GM12878 (cell line): ENCODE measurements at regions of chr1 and their contacts with region 1.

Region 1: GRCh38 chr1:116934586-116935207 is 25.0 kb downstream of the PTGFRN start:
- DNase-seq: no peak
- ATAC-seq: peak; percentile 83
- H3K4me3 ChIP-seq: no peak overlapping the region
- H3K27ac ChIP-seq: no peak overlapping the region
- H3K4me1 ChIP-seq: no peaks in the 10 kb centered on the region
- H3K27me3 ChIP-seq: no peaks in the 10 kb centered on the region
- CTCF ChIP-seq: peak; percentile 37 to 54 (median 43); a peak in 5 of 6 replicates
- EP300 ChIP-seq: no peak
- POLR2A ChIP-seq: no peak
- RAD21 ChIP-seq: peak; percentile 39; the same call in 1 of the 2 replicates

Region 2: DNA sequence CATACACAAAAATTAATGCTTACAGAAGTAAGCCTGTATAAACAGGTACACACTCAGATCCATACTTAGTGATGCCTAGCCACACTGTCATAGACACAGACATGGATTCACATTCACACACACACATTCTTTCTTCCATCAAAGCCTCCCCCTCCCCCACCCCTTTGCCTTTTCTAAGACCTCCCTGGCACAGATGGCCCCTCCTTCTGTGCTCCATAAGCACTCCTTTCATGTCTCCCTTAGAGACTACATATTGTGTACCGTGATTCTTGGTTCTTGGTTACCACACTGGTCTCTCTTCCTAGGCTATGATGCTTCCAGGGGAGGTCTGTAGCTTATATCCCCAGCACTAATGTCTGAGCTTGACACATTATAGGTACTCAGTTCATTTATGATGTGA is 1091.7 kb before region 1 on chr1:
- CTCF ChIA-PET with region 1: no interaction called
- POLR2A ChIA-PET with region 1: no interaction called
- RAD21 ChIA-PET with region 1: no interaction called
- SMC1A ChIA-PET with region 1: no interaction called
- in situ Hi-C with region 1: no loop called
- intact Hi-C with region 1: no loop called
- DNase-seq: no peak
- ATAC-seq: no peak
- H3K4me3 ChIP-seq: no peak overlapping the region
- H3K27ac ChIP-seq: no peak overlapping the region
- H3K4me1 ChIP-seq: no peaks in the 10 kb centered on the region
- H3K27me3 ChIP-seq: peaks cover 8 to 19% of the 10 kb centered on the region in 2 experiments
- CTCF ChIP-seq: no peak
- EP300 ChIP-seq: no peak
- POLR2A ChIP-seq: no peak
- RAD21 ChIP-seq: no peak

Region 3: GRCh38 chr1:116853670-116854402 is 80.9 kb before region 1 on chr1:
- CTCF ChIA-PET with region 1: interaction called, 7 read pairs
- POLR2A ChIA-PET with region 1: no interaction called
- RAD21 ChIA-PET with region 1: interaction called, 9 read pairs
- SMC1A ChIA-PET with region 1: interaction called, 10 read pairs
- in situ Hi-C with region 1: no loop called
- intact Hi-C with region 1: no loop called
- DNase-seq: no peak
- ATAC-seq: peak; percentile 81
- H3K4me3 ChIP-seq: no peak overlapping the region
- H3K27ac ChIP-seq: no peak overlapping the region
- H3K4me1 ChIP-seq: 0 out of 2 replicates have a peak, but pooled peaks cover 3% of the 10 kb centered on the region
- H3K27me3 ChIP-seq: no peaks in the 10 kb centered on the region
- CTCF ChIP-seq: no peak
- EP300 ChIP-seq: no peak
- POLR2A ChIP-seq: no peak
- RAD21 ChIP-seq: no peak

Region 4: GRCh38 chr1:116873680-116874271 is 60.9 kb before region 1 on chr1:
- CTCF ChIA-PET with region 1: interaction called, 8 read pairs
- POLR2A ChIA-PET with region 1: interaction called, 4 read pairs
- RAD21 ChIA-PET with region 1: interaction called, 22 read pairs
- SMC1A ChIA-PET with region 1: interaction called, 25 read pairs
- in situ Hi-C with region 1: no loop called
- intact Hi-C with region 1: no loop called
- DNase-seq: no peak
- ATAC-seq: peak; percentile 11
- H3K4me3 ChIP-seq: no peak overlapping the region
- H3K27ac ChIP-seq: no peak overlapping the region
- H3K4me1 ChIP-seq: peaks cover 8% of the 10 kb centered on the region; the same call in 1 of the 2 replicates
- H3K27me3 ChIP-seq: no peaks in the 10 kb centered on the region
- CTCF ChIP-seq: no peak
- EP300 ChIP-seq: no peak
- POLR2A ChIP-seq: no peak
- RAD21 ChIP-seq: no peak

Region 5: DNA sequence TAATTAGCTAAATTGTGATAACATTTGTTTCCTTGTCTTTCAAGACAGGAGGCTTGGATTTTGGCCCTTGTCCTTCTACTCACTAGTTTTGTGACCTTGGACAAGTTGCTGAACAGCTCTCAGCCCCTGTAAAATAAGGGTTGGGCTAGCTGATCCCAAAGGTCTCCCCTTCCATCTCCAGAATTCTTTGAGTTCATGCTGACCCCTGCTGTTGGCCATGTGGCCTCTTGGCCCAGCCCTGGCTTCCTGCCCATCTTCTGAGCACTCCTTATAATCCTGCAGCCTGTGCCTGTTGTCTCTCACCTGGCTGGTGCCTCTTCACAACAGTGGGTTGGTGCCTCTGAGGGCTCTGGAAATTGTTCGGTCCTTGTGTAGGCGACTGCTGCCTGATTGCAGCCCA is 14.9 kb before region 1 on chr1:
- CTCF ChIA-PET with region 1: interaction called, 10 read pairs
- POLR2A ChIA-PET with region 1: interaction called, 4 read pairs
- RAD21 ChIA-PET with region 1: interaction called, 13 read pairs
- SMC1A ChIA-PET with region 1: interaction called, 24 read pairs
- in situ Hi-C with region 1: no loop called
- intact Hi-C with region 1: no loop called
- DNase-seq: no peak
- ATAC-seq: peak; percentile 36
- H3K4me3 ChIP-seq: no peak overlapping the region
- H3K27ac ChIP-seq: no peak overlapping the region
- H3K4me1 ChIP-seq: no peaks in the 10 kb centered on the region
- H3K27me3 ChIP-seq: peaks cover 0 to 2% of the 10 kb centered on the region in 2 experiments; a peak in 1 of 4 replicates
- CTCF ChIP-seq: no peak
- EP300 ChIP-seq: no peak
- POLR2A ChIP-seq: no peak
- RAD21 ChIP-seq: no peak

Region 6: GRCh38 chr1:116954440-116954839 is 19.7 kb after region 1 on chr1:
- CTCF ChIA-PET with region 1: interaction called, 13 read pairs
- POLR2A ChIA-PET with region 1: no interaction called
- RAD21 ChIA-PET with region 1: no interaction called
- SMC1A ChIA-PET with region 1: interaction called, 4 read pairs
- in situ Hi-C with region 1: no loop called
- intact Hi-C with region 1: no loop called
- DNase-seq: no peak
- ATAC-seq: no peak
- H3K4me3 ChIP-seq: no peak overlapping the region
- H3K27ac ChIP-seq: no peak overlapping the region
- H3K4me1 ChIP-seq: no peaks in the 10 kb centered on the region
- H3K27me3 ChIP-seq: no peaks in the 10 kb centered on the region; a peak in 1 of 4 replicates
- CTCF ChIP-seq: no peak
- EP300 ChIP-seq: no peak
- POLR2A ChIP-seq: no peak
- RAD21 ChIP-seq: no peak

Region 7: GRCh38 chr1:117037802-117038201 is 103.1 kb after region 1 on chr1:
- CTCF ChIA-PET with region 1: no interaction called
- POLR2A ChIA-PET with region 1: no interaction called
- RAD21 ChIA-PET with region 1: no interaction called
- SMC1A ChIA-PET with region 1: no interaction called
- in situ Hi-C with region 1: no loop called
- intact Hi-C with region 1: no loop called
- DNase-seq: no peak
- ATAC-seq: no peak
- H3K4me3 ChIP-seq: no peak overlapping the region
- H3K27ac ChIP-seq: no peak overlapping the region
- H3K4me1 ChIP-seq: no peaks in the 10 kb centered on the region
- H3K27me3 ChIP-seq: no peaks in the 10 kb centered on the region
- CTCF ChIP-seq: no peak
- EP300 ChIP-seq: no peak
- POLR2A ChIP-seq: no peak
- RAD21 ChIP-seq: no peak

Region 8: DNA sequence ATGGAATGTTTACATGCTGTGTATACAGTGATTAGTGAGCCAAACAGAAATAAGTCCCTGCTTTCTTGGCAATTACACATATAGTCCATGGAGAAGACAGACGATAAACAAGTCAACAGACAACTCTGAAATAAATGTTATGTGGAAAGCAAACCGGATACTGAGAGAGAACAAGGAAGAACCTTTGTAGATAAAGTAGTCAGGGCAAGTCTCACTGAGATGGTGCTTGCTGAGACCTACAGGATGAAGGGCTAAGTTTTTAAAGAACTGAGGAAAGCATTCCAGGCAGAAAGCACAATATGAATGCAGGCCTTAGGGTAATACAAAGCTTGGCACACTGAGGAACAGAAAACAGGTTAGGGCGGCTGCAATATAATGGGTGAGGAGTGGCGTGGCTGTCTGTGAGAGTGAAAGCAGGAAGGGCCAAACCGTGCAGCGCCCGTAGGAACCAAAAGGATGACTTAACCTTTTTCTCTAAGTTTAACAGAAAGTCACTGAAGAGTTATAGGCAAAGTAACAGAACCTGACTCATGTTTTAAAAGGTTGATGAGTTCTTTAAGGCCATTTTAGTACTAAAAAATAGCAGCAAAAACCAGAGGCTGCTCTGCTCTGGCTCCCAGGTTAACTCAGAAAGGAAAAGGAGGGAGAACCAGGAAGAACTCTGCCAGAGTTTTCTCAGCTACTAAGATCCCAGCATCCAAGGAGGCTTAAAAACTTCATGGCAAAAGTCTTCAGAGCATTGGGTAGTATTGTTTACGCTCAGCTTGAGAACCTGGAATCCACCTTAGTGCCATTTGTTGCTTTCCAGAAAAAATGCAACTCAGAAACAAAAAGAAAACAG is 116.7 kb after region 1 on chr1:
- CTCF ChIA-PET with region 1: interaction called, 9 read pairs
- POLR2A ChIA-PET with region 1: no interaction called
- RAD21 ChIA-PET with region 1: interaction called, 6 read pairs
- SMC1A ChIA-PET with region 1: interaction called, 4 read pairs
- in situ Hi-C with region 1: no loop called
- intact Hi-C with region 1: loop called (anchors 5 kb)
- DNase-seq: peak; percentile 34
- ATAC-seq: peak; percentile 93
- H3K4me3 ChIP-seq: peak overlapping the region; percentile 61; the same call in 1 of the 2 replicates
- H3K27ac ChIP-seq: peak overlapping the region; percentile 89
- H3K4me1 ChIP-seq: peaks cover 13% of the 10 kb centered on the region
- H3K27me3 ChIP-seq: no peaks in the 10 kb centered on the region
- CTCF ChIP-seq: no peak
- EP300 ChIP-seq: no peak; a peak in 1 of 4 replicates
- POLR2A ChIP-seq: peak; percentile 55
- RAD21 ChIP-seq: peak; percentile 2; the same call in 1 of the 2 replicates

Region 9: DNA sequence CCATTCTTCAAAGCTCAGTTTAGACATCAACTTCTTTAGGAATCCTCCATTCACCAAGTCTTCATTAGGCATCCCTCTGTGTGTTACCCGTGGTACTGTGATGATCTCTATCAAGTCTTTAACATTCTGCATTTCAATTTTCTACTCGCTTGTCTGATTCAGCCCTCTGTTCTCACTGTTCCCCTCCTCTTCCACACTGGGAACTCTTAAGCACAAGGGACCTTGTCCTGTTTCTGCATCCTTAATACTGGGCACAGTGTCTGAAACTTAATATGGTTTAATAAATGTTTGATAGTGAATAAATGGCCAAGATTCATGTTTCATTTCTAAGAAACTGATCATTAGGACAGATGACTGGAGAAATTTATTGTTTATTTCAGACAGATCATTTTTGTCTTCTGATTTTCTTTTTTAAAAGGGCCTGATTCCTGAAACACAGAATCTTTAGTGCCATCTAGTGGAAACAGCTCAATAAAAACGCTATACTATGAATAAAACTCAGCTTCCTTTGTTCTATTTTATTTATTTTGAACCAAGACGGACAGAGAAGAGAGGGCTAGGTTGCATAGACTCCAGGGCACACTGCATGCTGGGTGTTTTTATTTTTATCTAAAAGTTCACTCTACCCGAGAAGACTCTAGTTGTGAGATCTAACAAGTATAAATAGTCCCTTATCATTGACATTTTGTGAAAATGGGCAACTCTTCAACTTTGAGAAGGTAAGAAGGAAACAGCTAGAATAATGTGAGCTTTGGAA is 193.8 kb after region 1 on chr1:
- CTCF ChIA-PET with region 1: interaction called, 8 read pairs
- POLR2A ChIA-PET with region 1: no interaction called
- RAD21 ChIA-PET with region 1: no interaction called
- SMC1A ChIA-PET with region 1: interaction called, 3 read pairs
- in situ Hi-C with region 1: no loop called
- intact Hi-C with region 1: loop called (anchors 5 kb)
- DNase-seq: no peak
- ATAC-seq: peak; percentile 79
- H3K4me3 ChIP-seq: no peak overlapping the region
- H3K27ac ChIP-seq: no peak overlapping the region
- H3K4me1 ChIP-seq: no peaks in the 10 kb centered on the region
- H3K27me3 ChIP-seq: peaks cover 0 to 3% of the 10 kb centered on the region in 2 experiments; a peak in 2 of 4 replicates
- CTCF ChIP-seq: peak in 2 of 3 experiments; percentile 47 to 52; a peak in 3 of 6 replicates
- EP300 ChIP-seq: no peak
- POLR2A ChIP-seq: no peak
- RAD21 ChIP-seq: peak; percentile 66

Region 10: GRCh38 chr1:117210831-117211261 is 276.1 kb after region 1 on chr1 and contains the start of gene VTCN1:
- CTCF ChIA-PET with region 1: no interaction called
- POLR2A ChIA-PET with region 1: no interaction called
- RAD21 ChIA-PET with region 1: no interaction called
- SMC1A ChIA-PET with region 1: no interaction called
- in situ Hi-C with region 1: no loop called
- intact Hi-C with region 1: no loop called
- DNase-seq: no peak
- ATAC-seq: no peak
- H3K4me3 ChIP-seq: no peak within 1 kb of the TSS
- H3K27ac ChIP-seq: no peak within 1 kb of the TSS
- H3K4me1 ChIP-seq: no peaks in the 10 kb centered on the region
- H3K27me3 ChIP-seq: peaks cover 2 to 3% of the 10 kb centered on the region in 2 experiments; a peak in 3 of 4 replicates
- CTCF ChIP-seq: no peak
- EP300 ChIP-seq: no peak
- POLR2A ChIP-seq: no peak
- RAD21 ChIP-seq: no peak
- polyA plus RNA-seq, gene VTCN1: not detected